Activated T-helper 1 cell treated with anti-CD3 and anti-CD28 coated beads, Interleukin-12 subunit alpha, Interleukin-12 subunit beta, Interleukin-2, Interleukin-4 antibody, amounts not matched to agents 30 ng/mL and 10 ng/mL and 1 ng/mL, durations not matched to agents 14 hours and 24 hours and 36 hours (primary cell): ENCODE measurements at regions of chr13 and their contacts with region 1.

Region 1: GRCh38 chr13:40682449-40683240 is 16.2 kb upstream of the FOXO1 start:
- DNase-seq: no peak
- H3K4me3 Mint-ChIP-seq: no peak overlapping the region
- H3K27ac Mint-ChIP-seq: peak overlapping the region; percentile 46
- H3K4me1 Mint-ChIP-seq: peaks cover 15% of the 10 kb centered on the region
- H3K27me3 Mint-ChIP-seq: peaks cover 2% of the 10 kb centered on the region

Region 2: DNA sequence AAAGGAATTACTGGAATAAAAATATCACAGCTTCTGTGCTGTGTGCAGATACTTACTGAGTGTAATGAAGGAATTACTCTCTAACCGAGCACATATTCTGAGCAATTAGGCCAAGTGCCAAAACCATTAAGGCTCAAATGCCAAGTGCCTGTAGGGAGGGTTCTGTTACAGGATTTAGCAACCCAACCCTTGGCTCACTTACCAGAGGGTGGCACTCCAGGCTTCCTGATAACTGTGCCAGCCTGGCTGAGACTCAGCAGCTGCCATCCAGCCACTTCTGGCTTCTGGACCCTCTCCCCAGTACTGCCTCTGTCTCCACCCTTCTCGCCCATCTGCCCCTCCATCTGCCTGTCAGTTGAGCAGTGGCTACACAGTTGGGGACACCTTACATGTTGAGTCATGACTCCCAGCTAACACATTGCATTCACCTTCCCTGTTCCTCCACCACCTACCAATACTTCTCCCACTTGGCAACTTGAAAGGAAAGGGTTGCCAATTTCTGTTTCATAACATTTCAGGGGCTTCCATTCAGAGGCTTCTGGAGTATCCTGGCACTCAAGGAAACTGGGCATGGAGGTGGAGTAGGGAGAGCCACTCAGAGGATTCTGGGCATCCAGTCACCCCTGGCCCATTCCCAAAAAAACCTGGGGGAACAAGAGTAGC is 916.7 kb before region 1 on chr13:
- intact Hi-C with region 1: loop called (anchors 1 kb)
- DNase-seq: no peak
- H3K4me3 Mint-ChIP-seq: no peak overlapping the region
- H3K27ac Mint-ChIP-seq: no peak overlapping the region
- H3K4me1 Mint-ChIP-seq: no peaks in the 10 kb centered on the region
- H3K27me3 Mint-ChIP-seq: no peaks in the 10 kb centered on the region

Region 3: DNA sequence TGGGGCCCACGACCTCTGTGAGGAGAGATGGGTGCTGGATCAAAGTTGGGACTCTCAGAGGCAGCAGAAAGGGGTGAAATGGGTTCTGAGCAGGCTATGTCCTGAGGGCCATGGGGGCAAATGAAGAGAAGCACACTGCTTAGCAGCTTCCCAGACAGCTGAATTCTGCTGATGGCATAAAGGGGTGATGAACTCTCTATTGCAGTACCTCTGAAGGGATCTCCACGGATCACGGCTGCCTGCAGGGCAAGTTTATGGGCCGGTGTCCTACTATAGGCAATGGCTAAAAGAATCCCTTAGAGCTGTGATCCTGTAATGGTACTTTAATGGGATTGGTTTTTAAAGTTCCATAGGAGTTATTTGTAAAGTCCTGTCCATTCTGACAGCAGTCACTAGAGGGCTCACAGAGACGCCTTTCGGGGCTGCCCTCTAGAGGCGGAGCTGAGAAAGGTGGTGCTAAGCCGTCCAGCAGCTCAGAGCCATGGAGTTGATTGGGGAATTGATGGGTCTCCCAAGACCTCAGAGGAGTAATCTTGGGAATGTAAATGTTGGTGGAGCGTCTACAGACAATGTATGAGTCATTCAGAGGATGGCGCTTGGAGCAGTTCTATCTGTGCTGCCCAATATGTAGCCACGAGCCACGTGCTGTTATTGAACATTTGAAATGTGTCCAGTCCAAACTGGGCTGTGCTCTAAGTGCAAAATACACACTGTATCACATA is 739.9 kb before region 1 on chr13:
- intact Hi-C with region 1: loop called (anchors 1 kb)
- DNase-seq: peak; percentile 54
- H3K4me3 Mint-ChIP-seq: no peak overlapping the region
- H3K27ac Mint-ChIP-seq: no peak overlapping the region
- H3K4me1 Mint-ChIP-seq: peaks cover 6% of the 10 kb centered on the region
- H3K27me3 Mint-ChIP-seq: peaks cover 4% of the 10 kb centered on the region

Region 4: DNA sequence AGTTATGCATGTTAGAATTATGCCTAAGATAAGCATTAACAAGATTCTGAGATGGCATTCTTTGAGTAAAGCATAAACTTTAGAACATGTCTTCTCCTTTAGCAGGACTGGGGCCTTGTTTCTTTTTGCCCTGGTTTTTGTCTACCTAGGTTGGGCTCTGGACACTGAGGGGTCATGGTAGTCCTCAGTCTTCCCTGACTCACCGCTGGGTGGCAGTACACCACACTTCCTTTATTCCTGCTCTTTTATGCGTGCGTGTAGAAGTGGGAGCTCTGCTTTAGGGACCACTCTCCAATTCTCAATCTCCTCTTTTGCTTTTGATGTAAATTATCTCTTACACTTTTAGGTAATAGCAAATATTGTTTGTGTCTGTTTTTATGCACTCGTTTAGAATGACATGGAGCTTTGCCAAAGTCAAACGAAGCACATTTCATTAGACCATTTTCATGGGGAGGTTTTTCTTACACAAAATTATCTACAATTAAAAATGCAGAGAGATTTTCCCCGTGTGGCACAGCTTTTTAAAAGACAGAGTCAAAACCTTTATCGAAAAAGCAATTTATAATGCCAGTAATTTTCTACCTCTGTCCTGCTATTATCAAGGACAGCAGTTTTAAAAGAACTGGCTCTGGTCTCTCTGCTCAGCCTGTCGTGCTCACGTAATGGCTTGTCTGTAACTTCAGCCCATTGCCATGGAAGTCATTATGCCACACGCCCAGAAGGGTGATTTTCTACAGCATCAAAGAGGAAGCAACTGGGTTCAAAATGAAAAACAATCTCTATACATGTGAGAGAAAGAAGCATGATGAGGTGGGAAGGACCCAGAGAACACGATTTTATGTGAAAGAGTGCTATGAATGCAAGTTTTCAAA is 613.2 kb before region 1 on chr13:
- intact Hi-C with region 1: loop called (anchors 1 kb)
- DNase-seq: peak; percentile 45
- H3K4me3 Mint-ChIP-seq: no peak overlapping the region
- H3K27ac Mint-ChIP-seq: no peak overlapping the region
- H3K4me1 Mint-ChIP-seq: peaks cover 37% of the 10 kb centered on the region
- H3K27me3 Mint-ChIP-seq: no peaks in the 10 kb centered on the region

Region 5: GRCh38 chr13:40629678-40630384 is 52.8 kb before region 1 on chr13:
- intact Hi-C with region 1: no loop called
- DNase-seq: no peak
- H3K4me3 Mint-ChIP-seq: peak overlapping the region; percentile 11
- H3K27ac Mint-ChIP-seq: peak overlapping the region; percentile 47
- H3K4me1 Mint-ChIP-seq: peaks cover 78% of the 10 kb centered on the region
- H3K27me3 Mint-ChIP-seq: no peaks in the 10 kb centered on the region

Region 6: GRCh38 chr13:40666045-40666904 is 16.4 kb before region 1 on chr13 and contains the start of gene FOXO1:
- intact Hi-C with region 1: no loop called
- DNase-seq: peak; percentile 88
- H3K4me3 Mint-ChIP-seq: peak within 1 kb of the TSS; percentile 91
- H3K27ac Mint-ChIP-seq: peak within 1 kb of the TSS; percentile 95
- H3K4me1 Mint-ChIP-seq: peaks cover 45% of the 10 kb centered on the region
- H3K27me3 Mint-ChIP-seq: peaks cover 2% of the 10 kb centered on the region
- total RNA-seq, gene FOXO1: 41.9 and 43.1 TPM in 2 replicates

Region 7: GRCh38 chr13:40777166-40777808 is 94.6 kb after region 1 on chr13:
- intact Hi-C with region 1: loop called (anchors 1 kb)
- DNase-seq: peak; percentile 28
- H3K4me3 Mint-ChIP-seq: peak overlapping the region; percentile 76
- H3K27ac Mint-ChIP-seq: peak overlapping the region; percentile 99
- H3K4me1 Mint-ChIP-seq: peaks cover 33% of the 10 kb centered on the region
- H3K27me3 Mint-ChIP-seq: no peaks in the 10 kb centered on the region